ENCODE measurements at regions of chr17 and their contacts with region 1.

Region 1: DNA sequence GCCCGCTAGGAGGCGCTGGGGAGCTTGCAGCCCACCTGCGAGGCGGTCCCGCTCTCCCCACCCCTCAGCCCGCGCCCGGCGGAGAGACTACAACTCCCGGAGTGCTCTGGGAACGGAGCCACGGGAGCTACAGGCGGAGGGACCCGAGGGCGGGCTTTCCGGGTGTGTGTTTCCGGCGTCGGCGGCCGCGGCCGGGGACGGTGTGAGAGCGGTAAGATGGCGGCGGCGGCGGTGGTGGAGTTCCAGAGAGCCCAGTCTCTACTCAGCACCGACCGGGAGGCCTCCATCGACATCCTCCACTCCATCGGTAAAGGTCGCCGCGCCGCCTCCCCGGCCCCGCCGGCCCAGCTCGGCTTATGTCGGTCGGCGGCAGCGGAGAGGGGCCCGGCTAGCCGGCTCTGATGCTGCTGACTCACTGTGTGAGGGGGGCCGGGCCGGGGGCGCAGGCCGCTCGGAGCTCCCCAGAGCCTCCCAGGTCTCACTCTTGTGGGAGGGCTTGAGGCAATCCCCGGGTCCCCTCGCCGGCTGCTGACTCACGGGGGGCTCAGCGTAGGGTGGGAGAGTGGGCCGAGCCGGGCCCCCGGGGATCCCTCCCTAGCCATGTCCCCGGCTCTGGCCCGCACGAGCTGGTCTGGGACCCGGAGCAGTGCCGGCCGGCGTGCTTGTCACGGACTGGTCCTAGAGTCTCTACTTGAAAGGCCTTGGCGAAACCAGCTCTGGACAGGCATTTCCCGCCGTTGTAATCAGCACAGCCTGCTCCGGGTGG is at the start of gene PSMD11:
- DNase-seq: peak; percentile 95
- ATAC-seq: peak; percentile 93
- H3K4me3 ChIP-seq: peak within 1 kb of the TSS; percentile 99
- H3K27ac ChIP-seq: peak within 1 kb of the TSS; percentile 89
- H3K4me1 ChIP-seq: peaks cover 6% of the 10 kb centered on the region
- H3K27me3 ChIP-seq: peaks cover 6% of the 10 kb centered on the region; the same call in 1 of the 2 replicates
- CTCF ChIP-seq: peak; percentile 92
- POLR2A ChIP-seq: peak; percentile 56; the same call in 1 of the 2 replicates
- RAD21 ChIP-seq: 0 out of 2 replicates have a peak, but pooled peaks have one; percentile 29
- total RNA-seq, gene PSMD11: 68.0 and 85.9 TPM in 2 replicates

Region 2: DNA sequence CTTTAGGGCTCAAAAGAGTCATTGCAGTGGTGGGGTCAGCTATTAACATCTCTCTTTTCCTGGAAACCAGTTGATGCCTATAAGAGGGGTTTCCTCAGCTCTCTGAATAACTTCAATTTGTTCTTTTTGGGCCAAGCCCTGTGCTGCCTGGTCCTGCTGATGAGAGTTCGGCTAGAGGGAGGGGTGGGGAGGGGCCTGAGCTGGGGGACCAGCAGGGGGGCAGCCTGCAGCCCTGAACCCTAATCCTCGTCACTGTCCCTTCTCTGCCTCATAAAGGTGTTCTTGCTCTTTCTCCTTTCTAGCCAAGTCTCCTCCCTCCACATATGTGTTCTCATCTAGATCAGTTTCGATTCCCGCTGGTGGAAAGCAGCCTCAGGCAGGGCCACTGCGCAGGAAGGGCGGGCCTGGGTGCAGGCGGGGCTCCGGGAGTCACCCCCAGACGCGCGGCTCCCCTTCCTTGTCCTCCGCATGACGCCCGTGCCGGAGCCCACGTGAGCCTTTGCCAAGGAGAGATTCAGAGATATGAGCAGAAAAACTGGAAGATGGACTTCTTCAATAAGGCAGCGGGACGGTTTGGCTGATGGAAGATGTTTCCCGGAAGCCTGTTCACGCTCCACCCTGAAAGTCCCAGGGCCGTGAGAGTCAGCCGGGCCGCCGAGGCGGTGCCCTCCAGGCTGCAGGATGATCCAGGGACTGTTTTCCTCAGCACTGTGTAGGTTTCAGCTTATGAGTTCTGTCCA is 317.2 kb before region 1 on chr17:
- CTCF ChIA-PET with region 1: no interaction called
- POLR2A ChIA-PET with region 1: no interaction called
- dilution Hi-C with region 1: no loop called
- in situ Hi-C with region 1: no loop called
- intact Hi-C with region 1: no loop called
- DNase-seq: peak; percentile 54
- ATAC-seq: peak; percentile 98
- H3K4me3 ChIP-seq: peak overlapping the region; percentile 56
- H3K27ac ChIP-seq: peak overlapping the region; percentile 59
- H3K4me1 ChIP-seq: 0 out of 2 replicates have a peak, but pooled peaks cover 2% of the 10 kb centered on the region
- H3K27me3 ChIP-seq: no peaks in the 10 kb centered on the region
- CTCF ChIP-seq: no peak
- POLR2A ChIP-seq: no peak; the same call in 1 of the 2 replicates
- RAD21 ChIP-seq: no peak

Region 3: DNA sequence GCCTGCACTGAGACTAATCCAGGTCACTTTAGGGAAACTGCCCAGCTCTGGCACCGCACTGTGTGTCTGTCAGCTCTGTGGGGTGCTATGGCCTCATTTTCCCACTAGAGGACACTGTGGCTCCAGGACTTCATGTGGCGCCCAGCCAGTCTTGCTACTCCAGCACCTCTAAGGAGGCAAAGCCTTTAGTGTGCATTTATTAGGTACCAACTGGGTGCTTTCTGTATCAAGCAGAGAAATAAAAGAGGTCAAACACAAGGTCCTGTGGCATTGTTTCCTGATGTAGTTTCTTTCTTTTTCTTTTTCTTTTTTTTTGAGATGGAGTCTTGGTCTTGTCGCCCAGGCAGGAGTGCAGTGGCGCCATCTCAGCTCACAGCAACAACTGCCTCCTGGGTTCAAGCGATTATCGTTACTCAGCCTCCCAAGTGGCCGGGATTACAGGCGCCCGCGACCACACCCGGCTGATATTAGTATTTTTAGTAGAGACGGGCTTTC is 191.3 kb before region 1 on chr17:
- CTCF ChIA-PET with region 1: no interaction called
- POLR2A ChIA-PET with region 1: no interaction called
- dilution Hi-C with region 1: no loop called
- in situ Hi-C with region 1: no loop called
- intact Hi-C with region 1: loop called (anchors 10 kb)
- DNase-seq: peak; percentile 65
- ATAC-seq: peak; percentile 97
- H3K4me3 ChIP-seq: no peak overlapping the region
- H3K27ac ChIP-seq: no peak overlapping the region
- H3K4me1 ChIP-seq: peaks cover 5% of the 10 kb centered on the region; the same call in 1 of the 2 replicates
- H3K27me3 ChIP-seq: peaks cover 4% of the 10 kb centered on the region; the same call in 1 of the 2 replicates
- CTCF ChIP-seq: peak; percentile 98
- POLR2A ChIP-seq: no peak
- RAD21 ChIP-seq: peak; percentile 99

Region 4: DNA sequence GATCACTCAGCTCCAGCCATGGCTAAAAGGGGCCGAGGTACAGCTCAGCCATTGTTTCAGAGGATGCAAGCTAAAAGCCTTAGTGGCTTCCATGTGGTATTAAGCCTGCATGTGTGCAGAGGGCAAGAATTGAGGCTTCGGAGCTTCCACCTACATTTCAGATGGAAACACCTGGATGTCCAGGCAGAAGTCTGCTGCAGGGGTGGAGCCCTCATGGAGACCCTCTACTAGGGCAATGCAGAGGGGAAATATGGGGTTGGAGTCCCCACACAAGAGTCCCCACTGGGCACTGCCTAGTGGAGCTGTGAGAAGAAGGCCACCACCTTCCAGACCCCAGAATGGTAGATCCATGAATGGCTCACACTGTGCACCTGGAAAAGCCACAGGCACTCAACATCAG is 14.9 kb before region 1 on chr17:
- CTCF ChIA-PET with region 1: interaction called, 7 read pairs
- POLR2A ChIA-PET with region 1: interaction called, 10 read pairs
- dilution Hi-C with region 1: no loop called
- in situ Hi-C with region 1: no loop called
- intact Hi-C with region 1: no loop called
- DNase-seq: no peak
- ATAC-seq: no peak
- H3K4me3 ChIP-seq: no peak overlapping the region
- H3K27ac ChIP-seq: no peak overlapping the region
- H3K4me1 ChIP-seq: no peaks in the 10 kb centered on the region
- H3K27me3 ChIP-seq: no peaks in the 10 kb centered on the region
- CTCF ChIP-seq: no peak
- POLR2A ChIP-seq: no peak
- RAD21 ChIP-seq: no peak

Measured in IMR-90 (cell line).